ENCODE measurements at regions of chrX and their contacts with region 1.

Region 1: GRCh38 chrX:7147978-7148824 is at the start of gene PUDP:
- DNase-seq: peak; percentile 83
- ATAC-seq: peak; percentile 95
- H3K4me3 ChIP-seq: peak within 1 kb of the TSS; percentile 70
- H3K27ac ChIP-seq: peak within 1 kb of the TSS; percentile 85
- H3K4me1 ChIP-seq: peaks cover 4% of the 10 kb centered on the region; the same call in 1 of the 2 replicates
- H3K27me3 ChIP-seq: 0 out of 2 replicates have a peak, but pooled peaks cover 2% of the 10 kb centered on the region
- CTCF ChIP-seq: peak; percentile 24
- POLR2A ChIP-seq: peak; percentile 48
- RAD21 ChIP-seq: peak; percentile 25
- total RNA-seq, gene PUDP: 22.2 and 25.0 TPM in 2 replicates

Region 2: GRCh38 chrX:7088968-7089615 is 59.1 kb before region 1 on chrX:
- CTCF ChIA-PET with region 1: no interaction called
- POLR2A ChIA-PET with region 1: no interaction called
- dilution Hi-C with region 1: no loop called
- in situ Hi-C with region 1: no loop called
- intact Hi-C with region 1: no loop called
- DNase-seq: no peak
- ATAC-seq: no peak
- H3K4me3 ChIP-seq: no peak overlapping the region
- H3K27ac ChIP-seq: no peak overlapping the region
- H3K4me1 ChIP-seq: peaks cover 4% of the 10 kb centered on the region
- H3K27me3 ChIP-seq: no peaks in the 10 kb centered on the region
- CTCF ChIP-seq: no peak
- POLR2A ChIP-seq: no peak
- RAD21 ChIP-seq: no peak

Region 3: GRCh38 chrX:7330971-7331746 is 183.0 kb after region 1 on chrX:
- CTCF ChIA-PET with region 1: no interaction called
- POLR2A ChIA-PET with region 1: no interaction called
- dilution Hi-C with region 1: no loop called
- in situ Hi-C with region 1: no loop called
- intact Hi-C with region 1: loop called (anchors 1 kb)
- DNase-seq: peak; percentile 85
- ATAC-seq: peak; percentile 50
- H3K4me3 ChIP-seq: no peak overlapping the region
- H3K27ac ChIP-seq: peak overlapping the region; percentile 55; the same call in 1 of the 2 replicates
- H3K4me1 ChIP-seq: peaks cover 8% of the 10 kb centered on the region
- H3K27me3 ChIP-seq: no peaks in the 10 kb centered on the region
- CTCF ChIP-seq: no peak
- POLR2A ChIP-seq: no peak
- RAD21 ChIP-seq: no peak

Region 4: GRCh38 chrX:7362111-7362510 is 213.9 kb after region 1 on chrX:
- CTCF ChIA-PET with region 1: no interaction called
- POLR2A ChIA-PET with region 1: interaction called, 13 read pairs
- dilution Hi-C with region 1: no loop called
- in situ Hi-C with region 1: no loop called
- intact Hi-C with region 1: no loop called
- DNase-seq: no peak
- ATAC-seq: no peak
- H3K4me3 ChIP-seq: no peak overlapping the region
- H3K27ac ChIP-seq: no peak overlapping the region
- H3K4me1 ChIP-seq: no peaks in the 10 kb centered on the region
- H3K27me3 ChIP-seq: no peaks in the 10 kb centered on the region; the same call in 1 of the 2 replicates
- CTCF ChIP-seq: no peak
- POLR2A ChIP-seq: no peak
- RAD21 ChIP-seq: no peak

Region 5: GRCh38 chrX:7586126-7586525 is 437.9 kb after region 1 on chrX:
- CTCF ChIA-PET with region 1: no interaction called
- POLR2A ChIA-PET with region 1: no interaction called
- dilution Hi-C with region 1: no loop called
- in situ Hi-C with region 1: no loop called
- intact Hi-C with region 1: loop called (anchors 5 kb)
- DNase-seq: peak; percentile 35
- ATAC-seq: peak; percentile 75
- H3K4me3 ChIP-seq: no peak overlapping the region
- H3K27ac ChIP-seq: no peak overlapping the region
- H3K4me1 ChIP-seq: no peaks in the 10 kb centered on the region
- H3K27me3 ChIP-seq: no peaks in the 10 kb centered on the region
- CTCF ChIP-seq: peak; percentile 53
- POLR2A ChIP-seq: no peak
- RAD21 ChIP-seq: peak; percentile 56

Measured in IMR-90 (cell line).